IMR-90 (cell line): ENCODE measurements at regions of chr3 and their contacts with region 1.

Region 1: DNA sequence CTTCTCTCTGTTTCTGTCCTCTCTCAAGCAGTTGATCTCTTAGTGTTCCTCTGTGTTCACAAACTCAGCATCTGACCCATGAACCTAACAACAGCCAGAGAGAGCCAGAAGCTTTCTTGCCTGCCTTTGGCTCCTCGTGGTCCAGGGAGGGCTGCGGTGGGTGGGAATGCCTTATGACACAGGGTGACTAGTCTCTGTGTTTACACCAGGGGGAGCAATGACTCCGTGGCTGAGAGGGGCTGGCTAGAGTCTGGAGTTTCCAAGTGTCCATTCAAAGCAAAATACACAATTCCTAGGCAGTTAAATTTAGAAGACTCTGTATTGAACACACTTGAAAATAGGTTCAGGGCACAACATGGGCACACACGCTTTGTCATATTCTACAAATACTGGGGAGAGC is 370.0 kb upstream of the FRG2C start:
- DNase-seq: peak; percentile 35
- ATAC-seq: peak; percentile 100
- H3K4me3 ChIP-seq: no peak overlapping the region
- H3K27ac ChIP-seq: no peak overlapping the region
- H3K4me1 ChIP-seq: no peaks in the 10 kb centered on the region
- H3K27me3 ChIP-seq: peaks cover 3% of the 10 kb centered on the region; the same call in 1 of the 2 replicates
- CTCF ChIP-seq: peak; percentile 70
- POLR2A ChIP-seq: no peak
- RAD21 ChIP-seq: peak; percentile 76

Region 2: DNA sequence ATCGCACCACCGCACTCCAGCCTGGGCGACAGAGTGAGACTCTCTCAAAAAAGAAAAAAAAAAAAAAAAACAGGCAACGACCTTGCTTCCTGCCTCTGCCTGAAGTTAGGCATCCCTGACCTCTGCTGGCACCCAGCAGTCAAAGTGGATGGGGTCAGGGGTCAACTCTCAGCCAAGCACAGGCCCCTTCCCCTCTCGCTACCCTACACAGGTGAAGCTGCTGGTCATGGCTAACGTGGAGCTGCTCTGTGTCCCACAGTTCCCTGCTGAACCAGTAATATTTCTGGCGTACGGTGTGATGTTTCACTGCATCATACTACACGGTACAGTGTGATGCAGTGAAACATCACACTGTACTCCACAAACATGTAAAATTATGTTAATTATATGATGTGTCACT is 356.1 kb after region 1 on chr3:
- CTCF ChIA-PET with region 1: no interaction called
- POLR2A ChIA-PET with region 1: no interaction called
- dilution Hi-C with region 1: no loop called
- in situ Hi-C with region 1: no loop called
- intact Hi-C with region 1: loop called (anchors 10 kb)
- DNase-seq: no peak
- ATAC-seq: no peak
- H3K4me3 ChIP-seq: no peak overlapping the region
- H3K27ac ChIP-seq: no peak overlapping the region
- H3K4me1 ChIP-seq: no peaks in the 10 kb centered on the region
- H3K27me3 ChIP-seq: peaks cover 1% of the 10 kb centered on the region
- CTCF ChIP-seq: no peak
- POLR2A ChIP-seq: no peak
- RAD21 ChIP-seq: no peak